ENCODE measurements at regions of chr22 and their contacts with region 1.

Region 1: DNA sequence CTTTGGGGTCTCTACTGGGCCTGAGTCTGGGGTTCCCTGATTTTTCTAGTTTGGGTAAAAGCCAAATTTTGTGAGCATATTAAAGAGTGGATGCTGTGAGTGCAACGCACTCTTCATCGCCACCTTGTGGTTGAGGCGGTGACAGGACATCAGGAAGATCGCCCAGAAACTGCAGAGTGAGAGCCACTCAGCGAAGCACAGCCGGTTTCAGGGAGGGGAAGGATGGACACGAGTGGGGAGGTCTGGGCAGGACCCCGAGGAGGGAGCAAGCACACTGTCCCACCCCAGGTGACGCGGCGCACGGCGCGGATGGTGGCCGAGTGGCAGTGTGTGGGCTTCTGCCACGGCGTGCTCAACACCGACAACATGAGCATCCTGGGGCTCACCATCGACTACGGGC is 9.1 kb downstream of the SELENOO start:
- DNase-seq: peak; percentile 74
- ATAC-seq: peak; percentile 45

Region 2: GRCh38 chr22:50148991-50149721 is 60.7 kb before region 1 on chr22:
- intact Hi-C with region 1: loop called (anchors 5 kb)
- DNase-seq: peak; percentile 77
- ATAC-seq: peak; percentile 86

Region 3: GRCh38 chr22:50260801-50261614 is 51.1 kb after region 1 on chr22:
- intact Hi-C with region 1: no loop called
- DNase-seq: peak; percentile 69
- ATAC-seq: peak; percentile 4